AG04450 (cell line): ENCODE measurements at regions of chr5 and their contacts with region 1.

Region 1: GRCh38 chr5:151686674-151687407 is at the start of gene SPARC:
- DNase-seq: peak; percentile 90
- H3K4me3 ChIP-seq: peak within 1 kb of the TSS; percentile 99
- H3K27ac ChIP-seq: peak within 1 kb of the TSS; percentile 94
- H3K27me3 ChIP-seq: no peaks in the 10 kb centered on the region
- CTCF ChIP-seq: 0 out of 2 replicates have a peak, but pooled peaks have one; percentile 16
- polyA plus RNA-seq, gene SPARC: 5,773 and 5,780 TPM in 2 replicates

Region 2: DNA sequence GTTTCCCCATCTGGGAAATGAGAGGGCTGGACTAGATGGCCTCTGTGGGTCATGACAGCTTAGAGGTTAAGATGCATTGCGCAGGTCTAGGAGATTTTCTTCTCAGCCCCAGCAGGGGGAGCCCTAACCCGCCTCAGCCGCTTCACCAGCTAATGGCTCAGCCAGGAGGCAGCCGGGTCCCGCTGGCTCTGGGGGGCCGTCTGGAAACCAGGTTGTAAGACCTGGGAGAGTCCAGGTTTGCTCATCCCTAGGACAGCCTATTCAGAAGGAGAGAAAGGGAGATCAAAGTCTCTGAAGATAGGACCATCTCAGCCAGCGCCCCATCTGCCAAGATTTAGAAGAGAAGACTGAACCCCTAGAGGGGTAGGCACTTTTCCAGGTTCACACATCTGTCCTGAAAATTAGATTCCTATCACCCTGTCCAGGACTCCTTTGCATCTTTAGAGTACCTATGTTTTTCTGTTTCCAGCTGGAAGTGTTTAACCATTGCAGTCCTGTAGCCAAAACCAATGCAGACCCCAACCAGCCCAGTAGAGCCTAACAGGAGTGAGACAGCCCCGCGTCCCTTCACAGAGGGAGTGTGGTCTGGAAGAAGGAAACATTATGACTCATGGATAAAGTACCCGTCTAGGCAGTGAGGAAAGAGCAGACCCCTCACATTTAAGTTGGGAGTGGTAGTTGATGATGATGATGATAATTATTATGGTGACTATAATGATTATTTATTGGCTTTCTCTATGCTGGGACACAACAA is 27.7 kb before region 1 on chr5:
- CTCF ChIA-PET with region 1: interaction called, 30 read pairs
- POLR2A ChIA-PET with region 1: interaction called, 39 read pairs
- DNase-seq: no peak
- H3K4me3 ChIP-seq: no peak overlapping the region
- H3K27ac ChIP-seq: peak overlapping the region; percentile 74
- H3K27me3 ChIP-seq: no peaks in the 10 kb centered on the region
- CTCF ChIP-seq: peak; percentile 92

Region 3: DNA sequence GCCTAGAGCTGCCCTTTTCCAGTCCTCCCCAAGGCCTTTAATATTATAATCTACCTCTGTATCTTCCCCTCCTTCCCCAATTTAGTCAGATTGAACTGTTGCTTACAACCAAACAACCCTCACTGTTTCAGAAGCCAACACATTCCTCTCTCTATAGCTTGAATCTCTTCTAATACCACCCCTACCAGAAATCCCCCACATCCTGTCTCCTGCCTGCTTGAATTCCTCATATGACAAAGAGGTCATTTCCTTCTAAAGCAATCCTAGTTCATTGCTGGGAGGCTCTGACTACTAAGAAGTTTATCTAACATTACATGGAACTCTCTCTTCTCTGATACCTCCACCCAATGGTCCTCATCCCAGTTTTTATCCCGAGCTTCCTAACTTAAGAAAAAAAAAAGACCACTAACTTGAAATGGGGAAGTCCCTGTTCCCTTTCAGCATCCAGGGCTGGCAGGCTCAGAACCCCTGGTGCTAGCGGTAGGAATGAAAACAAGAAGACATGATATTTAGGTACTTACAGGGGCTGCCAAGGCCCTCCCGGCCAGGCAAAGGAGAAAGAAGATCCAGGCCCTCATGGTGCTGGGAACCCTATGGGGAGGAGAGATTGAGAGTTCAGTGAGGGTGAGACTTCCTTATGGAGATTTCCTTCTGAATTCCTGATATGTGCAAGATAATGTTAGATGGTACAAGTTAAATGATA is 11.1 kb before region 1 on chr5:
- CTCF ChIA-PET with region 1: interaction called, 8 read pairs
- POLR2A ChIA-PET with region 1: interaction called, 81 read pairs
- DNase-seq: no peak
- H3K4me3 ChIP-seq: peak overlapping the region; percentile 39
- H3K27ac ChIP-seq: peak overlapping the region; percentile 90
- H3K27me3 ChIP-seq: no peaks in the 10 kb centered on the region
- CTCF ChIP-seq: peak; percentile 14; the same call in 1 of the 2 replicates

Region 4: GRCh38 chr5:151708126-151708525 is 21.3 kb after region 1 on chr5:
- CTCF ChIA-PET with region 1: interaction called, 6 read pairs
- POLR2A ChIA-PET with region 1: interaction called, 11 read pairs
- DNase-seq: no peak
- H3K4me3 ChIP-seq: no peak overlapping the region
- H3K27ac ChIP-seq: no peak overlapping the region
- H3K27me3 ChIP-seq: no peaks in the 10 kb centered on the region
- CTCF ChIP-seq: no peak

Region 5: DNA sequence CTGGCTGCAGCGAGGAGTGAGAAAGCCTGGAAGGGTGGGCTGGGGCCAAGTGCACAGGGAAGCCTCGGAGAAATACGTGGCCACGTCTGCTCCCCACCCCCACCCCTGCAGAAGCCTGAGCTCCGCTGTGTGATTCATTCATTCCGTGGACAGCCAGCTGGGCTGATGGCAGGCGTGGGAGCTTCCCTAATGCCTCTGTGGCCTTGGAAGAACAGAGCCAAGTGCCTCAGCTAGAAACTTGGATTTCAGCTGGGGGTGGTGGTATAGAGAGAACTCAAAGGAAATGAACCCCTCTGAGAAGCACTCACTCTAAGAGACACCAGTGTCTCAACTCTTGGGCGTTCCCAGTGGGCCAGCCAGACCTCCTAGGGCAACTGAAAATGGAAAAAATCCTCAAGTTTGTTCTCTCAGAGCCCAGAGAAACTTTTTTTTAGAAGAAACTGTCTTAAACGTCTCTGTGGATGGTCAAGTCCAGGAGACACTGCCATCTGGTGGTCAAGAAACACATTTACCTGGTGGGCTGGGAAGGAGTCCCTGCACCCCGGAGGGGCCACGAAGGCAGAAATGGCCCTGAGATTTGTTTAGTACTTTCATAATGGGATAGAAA is 53.6 kb after region 1 on chr5:
- CTCF ChIA-PET with region 1: interaction called, 44 read pairs
- POLR2A ChIA-PET with region 1: interaction called, 181 read pairs
- DNase-seq: peak; percentile 85
- H3K4me3 ChIP-seq: peak overlapping the region; percentile 27
- H3K27ac ChIP-seq: peak overlapping the region; percentile 99
- H3K27me3 ChIP-seq: no peaks in the 10 kb centered on the region
- CTCF ChIP-seq: peak; percentile 84